ENCODE measurements at regions of chr7 and their contacts with region 1.

Region 1: DNA sequence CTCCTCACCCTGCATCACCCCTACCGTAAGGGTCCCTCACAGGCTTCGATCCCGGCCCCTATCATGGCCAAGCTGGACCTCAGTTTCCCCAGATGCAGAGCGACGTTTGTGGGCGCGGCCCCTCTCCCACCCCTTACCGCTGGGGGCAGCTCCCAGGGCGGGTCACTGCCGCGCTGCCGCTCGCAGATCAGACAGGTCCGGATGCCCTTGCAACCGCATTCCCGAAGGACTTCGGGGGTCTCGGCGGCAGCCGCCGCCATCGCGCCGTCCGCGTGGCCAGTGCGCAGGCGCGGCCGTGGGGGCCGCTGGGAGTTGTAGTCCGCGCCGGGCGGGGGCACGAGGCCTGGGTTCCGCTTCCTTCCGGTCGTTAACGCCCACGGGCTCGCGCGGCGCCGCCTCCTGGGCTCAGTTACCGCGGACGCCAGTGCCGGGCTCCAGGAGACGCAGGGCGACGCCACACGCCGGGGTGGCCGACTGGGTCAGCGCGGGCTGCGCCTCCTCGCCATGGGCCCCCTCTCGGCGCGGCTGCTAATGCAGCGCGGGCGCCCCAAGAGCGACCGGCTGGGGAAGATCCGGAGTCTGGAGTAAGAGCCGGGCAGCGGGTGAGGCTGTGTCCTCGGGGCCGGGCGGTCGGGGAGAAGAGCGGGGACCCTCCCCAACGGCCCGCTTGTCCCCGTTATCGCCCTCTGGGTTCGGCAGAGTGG is at the starts of genes ALKBH4 and LRWD1:
- DNase-seq: peak; percentile 98
- ATAC-seq: peak; percentile 98
- H3K4me3 ChIP-seq: peak within 1 kb of the TSS; percentile 100
- H3K27ac ChIP-seq: peak within 1 kb of the TSS; percentile 87
- H3K4me1 ChIP-seq: peaks cover 20% of the 10 kb centered on the region
- H3K27me3 ChIP-seq: no peaks in the 10 kb centered on the region
- CTCF ChIP-seq: peak; percentile 18
- total RNA-seq, gene ALKBH4: 7.4 TPM
- total RNA-seq, gene LRWD1: 15.7 TPM

Region 2: GRCh38 chr7:102412548-102412947 is 52.2 kb before region 1 on chr7:
- intact Hi-C with region 1: loop called (anchors 10 kb)
- DNase-seq: no peak
- ATAC-seq: peak; percentile 59
- H3K4me3 ChIP-seq: no peak overlapping the region
- H3K27ac ChIP-seq: no peak overlapping the region
- H3K4me1 ChIP-seq: no peaks in the 10 kb centered on the region
- H3K27me3 ChIP-seq: no peaks in the 10 kb centered on the region
- CTCF ChIP-seq: peak; percentile 49

Region 3: DNA sequence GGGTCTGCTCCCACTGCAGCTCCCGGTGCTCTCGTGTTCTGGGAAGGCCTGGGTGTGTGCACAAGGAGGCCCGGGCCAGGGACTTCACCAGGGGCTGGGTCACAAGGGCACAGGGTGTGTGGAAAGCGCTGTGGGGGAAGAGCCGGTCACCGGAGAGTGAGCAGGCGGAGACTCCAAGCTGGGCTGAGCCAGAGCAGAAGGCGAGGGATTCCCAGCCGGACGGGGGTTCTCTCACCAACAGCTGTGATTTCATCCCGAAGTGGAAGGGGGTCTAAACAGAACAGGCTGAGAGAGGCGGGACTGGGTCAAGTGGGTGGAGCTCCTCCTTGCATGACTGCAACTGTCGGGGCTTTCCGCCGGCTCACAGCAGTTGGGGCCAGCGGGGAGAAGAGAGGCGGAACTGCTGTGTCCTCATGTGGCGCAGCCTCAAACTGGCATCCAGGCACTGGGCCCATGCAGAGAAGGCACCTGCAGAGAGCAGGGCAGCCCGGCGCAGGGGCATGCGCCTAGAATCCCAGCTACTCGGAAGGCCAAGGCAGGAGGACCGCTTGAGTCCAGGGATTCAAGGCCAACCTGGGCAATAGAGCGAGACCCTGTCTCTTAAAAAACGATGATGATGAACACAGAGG is 39.0 kb before region 1 on chr7:
- intact Hi-C with region 1: no loop called
- DNase-seq: peak; percentile 87
- ATAC-seq: peak; percentile 82
- H3K4me3 ChIP-seq: peak overlapping the region; percentile 12
- H3K27ac ChIP-seq: peak overlapping the region; percentile 84
- H3K4me1 ChIP-seq: no peaks in the 10 kb centered on the region
- H3K27me3 ChIP-seq: no peaks in the 10 kb centered on the region
- CTCF ChIP-seq: no peak